ENCODE measurements at regions of chr22 and their contacts with region 1.

Region 1: GRCh38 chr22:40684728-40685127 is 5.4 kb downstream of the MCHR1 start:
- DNase-seq: no peak

Region 2: GRCh38 chr22:40641269-40641668 is 43.5 kb before region 1 on chr22:
- CTCF ChIA-PET with region 1: no interaction called
- POLR2A ChIA-PET with region 1: no interaction called
- DNase-seq: no peak

Region 3: GRCh38 chr22:40714192-40714951 is 29.6 kb after region 1 on chr22:
- CTCF ChIA-PET with region 1: interaction called, 11 read pairs
- POLR2A ChIA-PET with region 1: interaction called, 3 read pairs
- DNase-seq: peak; percentile 37

Region 4: DNA sequence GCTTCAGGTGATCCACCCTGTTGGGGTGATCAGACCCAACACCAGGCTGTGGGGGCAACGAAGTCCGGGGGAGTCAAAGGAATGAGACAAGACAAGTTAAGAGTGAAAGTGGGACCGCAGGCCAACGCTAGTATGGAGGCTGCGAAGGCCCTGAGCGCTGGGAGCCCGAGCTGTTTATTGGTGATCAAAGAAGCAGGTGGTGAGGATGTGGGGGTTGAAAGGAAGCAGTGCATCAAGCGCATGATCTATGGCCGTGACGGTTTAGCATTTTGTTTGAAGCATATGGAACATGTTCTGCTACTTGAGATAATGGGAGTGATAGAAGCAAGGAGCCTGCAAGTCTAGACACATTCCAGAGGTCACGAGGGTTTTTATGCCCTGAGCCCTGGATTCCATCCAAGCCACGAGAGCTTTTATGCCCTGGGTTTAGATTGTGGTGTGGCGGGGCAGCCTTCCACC is 44.0 kb after region 1 on chr22:
- CTCF ChIA-PET with region 1: no interaction called
- POLR2A ChIA-PET with region 1: no interaction called
- DNase-seq: no peak

Region 5: DNA sequence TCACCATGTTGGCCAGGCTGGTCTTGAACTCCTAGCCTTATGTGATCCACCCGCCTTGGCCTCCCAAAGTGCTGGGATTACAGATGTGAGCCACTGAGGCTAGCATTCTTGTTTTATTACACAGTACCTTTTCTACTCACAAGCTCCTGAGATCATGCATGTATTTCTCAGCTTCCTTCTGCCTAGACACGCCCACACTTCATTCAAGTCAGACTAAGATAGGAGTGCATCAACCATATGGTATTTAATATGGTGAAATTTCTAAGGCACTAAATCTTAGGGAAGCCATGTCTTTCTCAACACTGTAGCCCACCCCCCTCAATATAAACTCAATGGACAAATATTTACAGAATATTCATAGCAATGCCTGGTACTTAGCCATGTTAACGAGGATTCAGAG is 72.3 kb after region 1 on chr22:
- CTCF ChIA-PET with region 1: interaction called, 30 read pairs
- POLR2A ChIA-PET with region 1: interaction called, 5 read pairs
- DNase-seq: no peak

Measured in HEK293T (cell line).